Dorsolateral prefrontal cortex (tissue), 120 donors: ENCODE measurements at regions of chr10 and their contacts with region 1.

Region 1: DNA sequence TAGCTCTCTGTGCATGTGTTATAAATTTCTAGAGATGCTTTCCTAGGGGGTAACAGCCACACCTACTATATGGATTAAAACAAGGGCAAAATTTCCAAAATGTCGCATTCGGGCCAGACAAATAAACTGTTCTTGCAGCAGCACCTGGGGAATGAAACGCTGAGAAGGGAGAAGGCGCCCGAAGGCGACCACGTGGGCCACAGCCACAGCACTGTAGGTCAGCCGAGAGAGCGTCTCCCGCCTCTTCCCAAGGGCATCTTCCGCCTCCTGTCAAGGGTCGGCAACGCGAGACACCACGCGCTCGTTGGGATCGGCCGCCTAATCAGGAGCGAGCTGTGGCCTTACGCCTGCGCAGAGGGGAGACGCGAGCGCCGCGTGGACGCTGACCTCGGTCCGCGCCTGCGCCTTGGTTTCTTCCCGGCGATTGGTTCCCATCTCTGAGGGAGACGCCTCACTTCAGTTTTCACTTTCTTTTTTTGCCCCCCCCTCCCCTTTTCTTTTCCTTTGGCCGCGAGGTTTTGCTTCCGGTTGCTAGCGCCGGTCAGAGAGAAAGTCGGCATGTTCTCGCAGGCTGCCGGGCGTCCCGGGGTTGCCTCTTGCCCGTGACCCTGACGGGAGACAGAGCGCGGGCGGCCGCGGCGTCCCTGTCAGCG is at the start of gene TASOR2:
- DNase-seq: peak; percentile 92 to 98 (median 95)
- H3K4me3 ChIP-seq: peak within 1 kb of the TSS; percentile 55 to 98 (median 90)
- H3K27ac ChIP-seq: peak within 1 kb of the TSS; percentile 9 to 93 (median 83)
- H3K27me3 ChIP-seq: no peaks in the 10 kb centered on the region
- CTCF ChIP-seq: peak in 41 of 56 donors; percentile 3 to 67 (median 33)
- total RNA-seq, gene TASOR2: 41.9 to 87.9 (median 67.5) TPM

Region 2: DNA sequence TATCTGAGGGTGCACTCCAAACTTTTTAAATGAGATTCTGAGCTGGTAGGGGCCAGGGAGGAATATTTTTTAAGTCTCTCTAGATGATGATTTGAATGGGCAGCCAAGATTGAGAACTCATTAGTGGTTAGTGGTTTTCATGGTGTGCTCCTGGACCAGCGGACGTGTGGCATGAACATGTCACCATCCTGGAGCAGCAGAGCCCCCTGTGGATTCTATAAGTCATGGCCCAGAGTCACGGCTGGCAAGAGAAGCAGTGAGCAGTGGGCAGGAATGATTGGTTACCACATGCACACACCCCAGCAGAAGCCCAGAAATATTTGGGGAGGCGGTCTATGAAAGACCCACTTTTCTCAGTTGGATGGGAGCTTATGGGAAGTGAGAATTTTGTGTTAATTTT is 340.9 kb before region 1 on chr10:
- intact Hi-C with region 1: no loop called
- DNase-seq: no peak
- H3K4me3 ChIP-seq: no peak overlapping the region
- H3K27ac ChIP-seq: no peak overlapping the region
- H3K27me3 ChIP-seq: peaks cover 0 to 6% (median 0%) of the 10 kb centered on the region in 45 donors
- CTCF ChIP-seq: no peak

Region 3: DNA sequence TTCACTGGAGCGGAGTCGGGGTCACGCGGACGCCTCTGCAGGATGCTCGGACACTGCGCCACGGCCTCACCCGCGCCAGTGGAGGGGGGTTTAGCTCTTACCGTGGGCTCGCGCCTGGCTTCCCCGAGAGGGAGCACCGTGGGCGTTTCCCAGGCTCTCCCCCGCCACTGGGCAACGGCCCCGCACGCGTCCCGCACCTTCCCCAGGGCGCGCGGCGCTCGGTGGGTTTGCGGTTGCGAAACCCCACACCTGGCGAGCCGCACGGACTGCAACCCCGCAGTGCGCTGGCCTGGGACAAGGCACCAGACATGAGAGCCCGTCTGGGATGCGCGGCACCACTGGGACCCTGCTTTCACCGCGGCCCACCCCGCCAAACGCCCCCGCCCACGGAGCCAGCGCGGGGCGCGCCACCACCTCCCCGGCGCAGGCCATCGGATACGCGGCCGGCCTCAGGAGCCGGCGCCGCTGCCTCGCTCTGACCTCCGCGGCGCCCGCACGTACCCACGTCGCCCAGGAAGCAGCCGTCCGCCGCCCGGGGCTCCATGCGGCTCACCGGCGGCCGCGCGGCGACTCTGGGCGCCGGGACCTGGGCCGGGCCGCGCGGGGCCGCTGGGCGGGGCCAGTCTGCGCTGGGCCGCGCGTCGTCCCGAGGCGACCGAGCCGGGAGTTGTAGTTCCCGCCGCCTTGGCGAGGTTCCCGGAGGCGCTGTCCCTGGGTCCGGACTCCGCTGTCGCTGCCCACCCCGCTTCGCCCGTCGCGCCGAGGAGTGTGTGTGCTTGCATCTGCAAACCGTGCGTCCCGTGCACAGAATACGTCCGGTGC is 18.2 kb before region 1 on chr10 and contains the start of gene ASB13:
- intact Hi-C with region 1: loop called in 1 of 2 experiments (anchors 1 kb)
- DNase-seq: peak; percentile 67 to 84 (median 69)
- H3K4me3 ChIP-seq: peak within 1 kb of the TSS; percentile 61 to 97 (median 90)
- H3K27ac ChIP-seq: peak within 1 kb of the TSS in 51 of 59 donors; percentile 21 to 90 (median 66)
- H3K27me3 ChIP-seq: no peaks in the 10 kb centered on the region
- CTCF ChIP-seq: peak in 4 of 56 donors; percentile 9 to 16 (median 14)
- total RNA-seq, gene ASB13: 21.6 to 57.5 (median 36.3) TPM

Region 4: DNA sequence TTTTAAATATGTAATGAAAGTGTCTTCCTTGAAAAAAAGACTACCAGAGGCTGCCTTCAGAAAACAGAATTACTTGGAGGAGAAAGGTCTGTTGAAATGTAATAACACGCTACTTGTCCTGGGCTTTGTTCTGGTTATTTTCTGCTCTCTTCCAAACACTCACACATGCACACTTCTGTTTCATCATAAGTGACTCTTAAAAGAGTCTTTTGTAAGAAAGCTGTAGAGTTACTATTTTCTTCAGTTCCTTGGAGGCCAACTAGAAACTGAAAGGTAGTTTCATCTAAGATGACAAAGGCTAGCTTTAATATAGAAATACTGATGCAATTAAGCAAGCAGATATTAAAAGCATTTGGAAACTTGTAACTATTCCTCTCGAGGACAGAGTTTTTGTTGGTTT is 39.2 kb after region 1 on chr10:
- intact Hi-C with region 1: no loop called
- DNase-seq: no peak
- H3K4me3 ChIP-seq: no peak overlapping the region
- H3K27ac ChIP-seq: no peak overlapping the region
- H3K27me3 ChIP-seq: no peaks in the 10 kb centered on the region
- CTCF ChIP-seq: no peak

Region 5: DNA sequence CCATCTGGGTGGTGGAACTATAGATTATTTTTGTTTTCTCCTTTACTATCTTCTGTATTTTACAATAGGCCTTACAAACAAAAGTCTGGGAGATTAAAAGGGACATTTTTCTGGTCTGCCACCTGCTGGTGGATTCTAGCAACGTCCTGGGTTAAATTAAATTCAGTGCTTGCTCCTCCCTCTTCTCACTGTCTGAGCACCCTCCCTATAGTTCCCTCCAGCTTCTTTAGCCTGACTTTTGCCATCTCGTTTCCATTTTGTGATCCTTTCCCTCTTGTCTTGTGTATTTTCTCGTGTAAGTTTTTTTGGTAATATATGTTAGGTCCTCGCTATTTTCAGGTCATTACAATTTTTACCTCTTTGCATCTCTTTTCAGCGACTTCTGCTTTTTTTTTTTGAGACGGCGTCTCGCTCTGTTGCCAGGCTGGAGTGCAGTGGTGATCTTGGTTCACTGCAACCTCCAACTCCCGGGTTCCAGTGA is 189.1 kb after region 1 on chr10:
- intact Hi-C with region 1: loop called (anchors 2 to 5 kb)
- DNase-seq: peak in 8 of 10 donors; percentile 50 to 78 (median 60)
- H3K4me3 ChIP-seq: peak overlapping the region in 4 of 59 donors; percentile 7 to 30 (median 7)
- H3K27ac ChIP-seq: peak overlapping the region in 45 of 59 donors; percentile 2 to 81 (median 52)
- H3K27me3 ChIP-seq: no peaks in the 10 kb centered on the region
- CTCF ChIP-seq: peak; percentile 59 to 93 (median 83)

Region 6: GRCh38 chr10:5889624-5890451 is 205.4 kb after region 1 on chr10 and contains the starts of genes ANKRD16 and FBH1:
- intact Hi-C with region 1: loop called (anchors 5 kb)
- DNase-seq: peak; percentile 94 to 99 (median 97)
- H3K4me3 ChIP-seq: peak within 1 kb of the TSS; percentile 63 to 97 (median 92)
- H3K27ac ChIP-seq: peak within 1 kb of the TSS in 53 of 59 donors; percentile 23 to 91 (median 76)
- H3K27me3 ChIP-seq: no peaks in the 10 kb centered on the region
- CTCF ChIP-seq: peak in 30 of 56 donors; percentile 7 to 56 (median 28)
- total RNA-seq, gene ANKRD16: 10.4 to 26.5 (median 18.4) TPM
- total RNA-seq, gene FBH1: 43.3 to 95.3 (median 62.7) TPM